A673 (cell line): ENCODE measurements at regions of chrX and their contacts with region 1.

Region 1: DNA sequence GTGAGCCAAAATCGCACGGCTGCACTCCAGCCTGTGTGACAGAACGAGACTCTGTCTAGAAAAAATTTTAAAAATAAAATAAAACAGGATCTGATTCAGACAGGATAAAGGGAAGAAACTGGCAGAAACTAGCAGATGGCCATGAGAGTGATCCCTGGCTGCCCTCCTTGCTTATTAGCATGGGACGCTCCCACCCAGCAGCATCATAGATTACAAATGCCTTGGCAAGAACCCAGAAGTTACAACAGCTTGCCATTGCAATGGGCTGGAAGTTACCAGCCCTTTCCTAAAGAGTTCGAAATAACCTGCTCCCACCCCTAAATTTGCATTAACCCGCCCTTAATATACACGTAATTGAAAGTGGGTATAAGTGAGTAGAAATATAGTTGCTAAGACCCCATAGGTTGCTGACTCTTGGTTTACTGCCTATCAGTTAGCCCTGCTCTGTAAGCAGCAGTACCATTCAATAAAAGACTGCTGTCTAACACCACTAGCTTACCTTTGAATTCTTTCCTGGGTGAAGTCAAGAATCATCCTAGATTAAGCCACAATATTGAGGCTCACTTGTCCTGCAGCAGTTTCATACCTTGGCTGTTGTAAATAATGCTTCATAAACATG is 9.1 kb upstream of the XAGE2 start:
- DNase-seq: peak; percentile 45
- H3K4me3 ChIP-seq: no peak overlapping the region
- H3K27ac ChIP-seq: no peak overlapping the region
- H3K4me1 ChIP-seq: peaks cover 13% of the 10 kb centered on the region
- H3K27me3 ChIP-seq: no peaks in the 10 kb centered on the region
- CTCF ChIP-seq: no peak

Region 2: DNA sequence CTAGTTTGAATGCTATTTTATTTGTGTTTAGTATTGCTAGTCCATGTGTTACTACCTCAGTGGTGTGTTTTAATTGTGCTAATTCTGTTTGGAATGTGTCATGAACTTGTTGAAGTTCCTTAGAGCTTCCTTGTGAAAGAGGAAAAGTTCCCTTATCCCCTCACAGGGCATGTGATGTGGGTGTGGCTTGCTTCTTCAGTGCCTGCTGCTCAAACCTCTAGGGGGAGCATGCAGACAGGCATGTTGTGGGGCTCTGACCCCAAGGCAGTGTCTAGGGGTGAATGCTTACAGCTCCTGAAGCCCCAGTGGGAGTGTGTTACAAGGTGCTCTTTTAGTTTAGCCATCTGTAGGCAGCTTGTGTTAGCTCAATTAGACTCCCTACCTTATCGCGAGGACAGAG is 88.5 kb before region 1 on chrX:
- CTCF ChIA-PET with region 1: no interaction called
- POLR2A ChIA-PET with region 1: no interaction called
- intact Hi-C with region 1: loop called (anchors 10 kb)
- DNase-seq: peak; percentile 80
- H3K4me3 ChIP-seq: no peak overlapping the region
- H3K27ac ChIP-seq: no peak overlapping the region
- H3K4me1 ChIP-seq: peaks cover 13% of the 10 kb centered on the region
- H3K27me3 ChIP-seq: no peaks in the 10 kb centered on the region
- CTCF ChIP-seq: peak; percentile 74

Region 3: GRCh38 chrX:52422884-52423283 is 63.2 kb after region 1 on chrX:
- CTCF ChIA-PET with region 1: no interaction called
- POLR2A ChIA-PET with region 1: no interaction called
- intact Hi-C with region 1: no loop called
- DNase-seq: no peak
- H3K4me3 ChIP-seq: no peak overlapping the region
- H3K27ac ChIP-seq: no peak overlapping the region
- H3K4me1 ChIP-seq: no peaks in the 10 kb centered on the region
- H3K27me3 ChIP-seq: no peaks in the 10 kb centered on the region
- CTCF ChIP-seq: no peak